HepG2 (cell line): ENCODE measurements at regions of chr2 and their contacts with region 1.

Region 1: DNA sequence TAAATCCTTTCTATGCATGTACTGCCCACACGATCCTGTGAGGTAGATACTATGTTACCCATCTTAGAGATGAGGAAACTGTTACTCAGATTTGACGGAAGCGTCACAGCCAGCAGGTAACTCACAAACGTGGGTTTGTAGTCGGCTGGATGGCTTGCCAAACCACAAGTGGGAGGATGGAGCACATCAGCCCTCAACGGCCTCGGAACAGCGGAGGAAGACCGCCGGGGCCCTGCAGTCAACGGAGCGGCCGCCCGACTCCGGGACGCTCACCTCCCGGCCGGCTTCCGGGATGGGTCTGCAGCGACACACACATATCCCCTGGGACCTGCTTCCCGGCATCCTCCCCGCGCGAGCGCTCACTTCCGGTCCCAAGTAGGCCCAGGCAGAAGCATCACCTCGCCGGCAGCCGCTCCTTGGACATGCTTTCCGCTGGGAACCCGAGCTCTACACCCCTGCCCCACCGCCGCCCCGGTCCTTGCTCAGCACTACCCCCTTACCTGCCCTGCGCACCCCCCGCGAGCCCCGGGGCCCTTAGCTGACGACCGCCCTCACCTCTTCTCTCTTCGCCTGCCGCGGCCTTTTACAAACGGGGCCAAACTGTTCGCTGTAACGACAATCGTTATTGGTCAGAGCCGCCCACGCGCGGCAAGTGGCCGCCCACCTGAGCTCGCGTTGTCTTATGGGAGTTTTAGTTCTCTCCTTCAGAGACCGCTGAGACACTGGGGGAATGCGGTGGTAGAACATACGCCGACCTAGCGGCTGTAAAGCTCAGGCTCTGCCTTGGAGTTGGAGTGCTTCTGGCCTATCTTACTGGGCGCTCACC is at the start of gene C2orf42:
- DNase-seq: peak; percentile 98
- ATAC-seq: peak; percentile 96
- H3K4me3 ChIP-seq: peak within 1 kb of the TSS; percentile 69 to 88 (median 86)
- H3K27ac ChIP-seq: peak within 1 kb of the TSS; percentile 83
- H3K4me1 ChIP-seq: peaks cover 36% of the 10 kb centered on the region
- H3K27me3 ChIP-seq: no peaks in the 10 kb centered on the region; a peak in 1 of 5 replicates
- CTCF ChIP-seq: peak; percentile 54
- EP300 ChIP-seq: 0 out of 4 replicates have a peak, but pooled peaks of 1 of the 2 experiments have one; percentile 60
- POLR2A ChIP-seq: peak; percentile 96 to 99
- RAD21 ChIP-seq: peak; percentile 29
- total RNA-seq, gene C2orf42: 9.9 and 11.1 TPM in 2 replicates

Region 2: GRCh38 chr2:70094978-70095719 is 95.5 kb before region 1 on chr2:
- CTCF ChIA-PET with region 1: no interaction called
- POLR2A ChIA-PET with region 1: interaction called, 15 read pairs
- in situ Hi-C with region 1: no loop called
- intact Hi-C with region 1: no loop called
- DNase-seq: peak; percentile 87
- ATAC-seq: peak; percentile 73
- H3K4me3 ChIP-seq: peak overlapping the region; percentile 36 to 67 (median 50)
- H3K27ac ChIP-seq: peak overlapping the region; percentile 73
- H3K4me1 ChIP-seq: peaks cover 46% of the 10 kb centered on the region
- H3K27me3 ChIP-seq: no peaks in the 10 kb centered on the region
- CTCF ChIP-seq: no peak
- EP300 ChIP-seq: peak in 1 of 2 experiments; percentile 51; a peak in 2 of 4 replicates
- POLR2A ChIP-seq: peak; percentile 24 to 48; a peak in 1 of 4 replicates
- RAD21 ChIP-seq: no peak; the same call in 1 of the 2 replicates

Region 3: GRCh38 chr2:70132244-70133126 is 58.1 kb before region 1 on chr2:
- CTCF ChIA-PET with region 1: no interaction called
- POLR2A ChIA-PET with region 1: interaction called, 17 read pairs
- in situ Hi-C with region 1: no loop called
- intact Hi-C with region 1: no loop called
- DNase-seq: peak; percentile 86
- ATAC-seq: peak; percentile 83
- H3K4me3 ChIP-seq: peak overlapping the region; percentile 53 to 74 (median 73)
- H3K27ac ChIP-seq: peak overlapping the region; percentile 86
- H3K4me1 ChIP-seq: peaks cover 68% of the 10 kb centered on the region
- H3K27me3 ChIP-seq: no peaks in the 10 kb centered on the region
- CTCF ChIP-seq: no peak
- EP300 ChIP-seq: no peak; a peak in 1 of 4 replicates
- POLR2A ChIP-seq: peak; percentile 31 to 83; a peak in 3 of 4 replicates
- RAD21 ChIP-seq: 0 out of 2 replicates have a peak, but pooled peaks have one; percentile 21

Region 4: DNA sequence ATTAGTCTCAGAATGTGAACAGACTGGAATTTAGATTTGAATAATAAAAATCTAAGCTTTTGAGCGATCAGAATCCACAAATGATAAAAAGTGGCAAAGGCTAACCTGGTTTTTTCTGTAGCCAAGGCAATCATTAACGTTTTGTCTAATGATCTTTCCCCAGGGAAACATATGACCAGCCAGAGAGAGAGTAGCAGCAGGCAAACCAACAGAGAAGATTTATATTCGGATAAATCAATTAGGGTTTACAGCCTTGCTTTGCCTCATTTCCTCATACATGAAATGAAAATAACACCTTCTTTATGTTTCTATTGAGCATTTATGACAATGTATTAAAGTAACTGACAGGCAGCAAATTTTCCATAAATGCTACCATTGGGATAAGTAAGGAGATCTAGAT is 43.3 kb after region 1 on chr2:
- CTCF ChIA-PET with region 1: no interaction called
- POLR2A ChIA-PET with region 1: no interaction called
- in situ Hi-C with region 1: no loop called
- intact Hi-C with region 1: no loop called
- DNase-seq: no peak
- ATAC-seq: no peak
- H3K4me3 ChIP-seq: no peak overlapping the region
- H3K27ac ChIP-seq: no peak overlapping the region
- H3K4me1 ChIP-seq: no peaks in the 10 kb centered on the region
- H3K27me3 ChIP-seq: no peaks in the 10 kb centered on the region
- CTCF ChIP-seq: no peak
- EP300 ChIP-seq: no peak
- POLR2A ChIP-seq: no peak
- RAD21 ChIP-seq: no peak

Region 5: DNA sequence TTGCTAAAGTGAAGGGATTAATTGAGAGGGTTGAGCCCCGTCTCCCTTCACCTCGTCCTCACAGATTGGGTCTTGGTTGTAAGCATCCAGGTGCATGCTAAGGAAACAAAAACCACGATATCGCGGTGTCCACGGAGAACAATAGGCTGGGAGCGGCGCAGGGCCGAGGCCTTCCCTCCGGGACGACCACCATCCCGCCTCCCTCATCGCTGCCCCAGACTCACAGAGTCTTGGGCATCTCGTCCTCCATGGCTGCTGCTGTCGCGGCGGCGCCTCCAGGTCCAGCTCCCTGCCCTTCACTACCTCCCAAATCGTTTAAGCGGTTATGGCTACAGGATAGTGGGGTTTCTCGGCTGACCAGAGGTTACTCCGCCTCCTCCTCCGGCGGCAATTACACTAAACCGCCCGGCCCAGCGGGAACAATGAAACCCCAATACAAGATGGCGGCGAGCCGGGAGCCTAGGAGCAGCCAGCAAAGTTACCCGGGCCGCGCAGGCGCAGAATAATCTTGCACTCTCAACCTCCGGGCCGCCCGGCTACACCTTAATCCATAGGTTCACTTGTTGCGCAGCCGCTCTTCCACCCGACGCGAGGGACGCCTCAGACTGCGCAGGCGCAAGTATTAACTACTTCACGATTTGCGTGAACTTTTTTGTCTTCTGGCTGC is 57.7 kb after region 1 on chr2 and contains the start of gene TIA1:
- CTCF ChIA-PET with region 1: no interaction called
- POLR2A ChIA-PET with region 1: interaction called, 15 read pairs
- in situ Hi-C with region 1: no loop called
- intact Hi-C with region 1: loop called (anchors 2 kb)
- DNase-seq: peak; percentile 99
- ATAC-seq: peak; percentile 93
- H3K4me3 ChIP-seq: peak within 1 kb of the TSS; percentile 96 to 98 (median 98)
- H3K27ac ChIP-seq: peak within 1 kb of the TSS; percentile 98
- H3K4me1 ChIP-seq: peaks cover 47% of the 10 kb centered on the region
- H3K27me3 ChIP-seq: no peaks in the 10 kb centered on the region; a peak in 1 of 5 replicates
- CTCF ChIP-seq: no peak
- EP300 ChIP-seq: peak in 1 of 2 experiments; percentile 54; a peak in 1 of 4 replicates
- POLR2A ChIP-seq: peak; percentile 92 to 98
- RAD21 ChIP-seq: peak; percentile 37; the same call in 1 of the 2 replicates
- total RNA-seq, gene TIA1: 199 and 209 TPM in 2 replicates

Region 6: DNA sequence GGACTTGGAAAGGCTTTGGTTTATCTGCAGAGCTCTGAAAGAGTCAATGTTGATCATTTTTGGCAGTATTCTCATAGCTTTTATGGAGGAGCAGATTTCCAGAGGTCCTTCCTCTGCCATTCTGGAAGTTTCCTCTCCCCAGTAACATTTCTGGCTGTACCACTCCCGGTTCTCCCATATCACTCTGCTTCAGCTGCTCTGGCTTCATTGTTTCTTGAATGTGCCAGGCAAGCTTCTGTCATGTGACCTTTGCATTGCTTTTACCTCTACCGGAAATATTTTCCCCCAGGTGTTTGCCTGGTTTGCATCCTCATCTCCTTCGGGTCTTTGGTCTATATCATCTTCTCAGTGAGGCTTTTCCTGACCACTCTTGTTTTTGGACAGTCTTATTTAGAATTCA is 79.7 kb after region 1 on chr2:
- CTCF ChIA-PET with region 1: no interaction called
- POLR2A ChIA-PET with region 1: interaction called, 11 read pairs
- in situ Hi-C with region 1: no loop called
- intact Hi-C with region 1: no loop called
- DNase-seq: no peak
- ATAC-seq: no peak
- H3K4me3 ChIP-seq: peak overlapping the region in 1 of 3 experiments; percentile 32; a peak in 1 of 6 replicates
- H3K27ac ChIP-seq: peak overlapping the region; percentile 78
- H3K4me1 ChIP-seq: peaks cover 28% of the 10 kb centered on the region
- H3K27me3 ChIP-seq: no peaks in the 10 kb centered on the region
- CTCF ChIP-seq: no peak
- EP300 ChIP-seq: no peak
- POLR2A ChIP-seq: no peak
- RAD21 ChIP-seq: no peak